ENCODE measurements at regions of chr14 and their contacts with region 1.

Region 1: GRCh38 chr14:99192028-99192621 is 79.9 kb downstream of the BCL11B start:
- DNase-seq: peak in 1 of 2 donors; percentile 74
- ATAC-seq: peak in 2 of 3 donors; percentile 37 to 50
- H3K4me3 ChIP-seq: no peak overlapping the region
- H3K4me3 Mint-ChIP-seq: peak overlapping the region; percentile 90
- H3K27ac ChIP-seq: peak overlapping the region; percentile 44
- H3K27ac Mint-ChIP-seq: peak overlapping the region; percentile 84 to 89
- H3K4me1 ChIP-seq: peaks cover 60% of the 10 kb centered on the region
- H3K4me1 Mint-ChIP-seq: peaks cover 57 to 84% of the 10 kb centered on the region in 2 donors
- H3K27me3 ChIP-seq: no peaks in the 10 kb centered on the region
- H3K27me3 Mint-ChIP-seq: no peaks in the 10 kb centered on the region
- CTCF ChIP-seq: no peak

Region 2: DNA sequence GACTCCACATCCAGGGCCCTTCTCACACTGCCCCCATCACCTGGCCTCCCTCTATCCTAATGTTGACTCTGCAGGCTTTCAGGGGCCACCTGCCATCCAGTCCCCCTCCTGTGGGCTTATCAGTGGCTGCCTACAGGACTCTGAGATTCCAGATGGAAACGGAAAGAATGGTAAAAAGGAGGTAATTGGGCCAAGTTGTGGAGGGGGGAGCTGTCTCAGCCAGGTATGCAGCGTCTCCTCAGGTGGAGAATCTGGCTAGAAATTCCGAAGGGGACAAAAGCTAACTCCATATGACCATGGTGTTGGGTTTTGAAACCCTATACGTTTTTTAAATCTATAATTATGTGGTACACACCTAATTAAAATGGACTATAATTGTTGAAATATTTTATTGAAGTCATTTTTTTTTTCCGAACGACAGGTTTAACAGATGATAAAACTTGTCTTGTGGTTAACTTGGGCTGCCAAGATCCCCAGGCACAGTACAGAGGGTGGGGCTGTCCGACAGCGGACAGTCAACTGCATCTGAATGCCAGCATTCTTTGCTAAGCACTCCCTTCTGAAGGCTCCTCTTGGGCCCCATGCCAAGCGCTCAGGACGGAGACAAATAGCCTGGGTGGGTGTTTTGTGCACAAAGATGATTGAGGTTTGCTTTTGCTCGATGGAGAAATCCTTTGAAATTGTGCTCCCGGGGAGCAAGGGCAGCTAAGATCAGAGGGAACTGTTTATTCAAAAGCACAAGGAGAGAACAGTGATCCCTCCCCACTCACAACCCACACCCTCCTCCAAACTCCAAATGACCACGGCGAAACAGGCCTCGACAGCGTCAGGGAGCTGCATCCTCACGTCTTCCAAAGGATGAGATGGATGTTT is 285.8 kb before region 1 on chr14:
- intact Hi-C with region 1: no loop called
- DNase-seq: no peak
- ATAC-seq: no peak
- H3K4me3 ChIP-seq: no peak overlapping the region
- H3K4me3 Mint-ChIP-seq: no peak overlapping the region
- H3K27ac ChIP-seq: no peak overlapping the region
- H3K27ac Mint-ChIP-seq: no peak overlapping the region
- H3K4me1 ChIP-seq: no peaks in the 10 kb centered on the region
- H3K4me1 Mint-ChIP-seq: no peaks in the 10 kb centered on the region
- H3K27me3 ChIP-seq: no peaks in the 10 kb centered on the region
- H3K27me3 Mint-ChIP-seq: peaks cover 11 to 17% of the 10 kb centered on the region in 2 donors
- CTCF ChIP-seq: no peak

Region 3: GRCh38 chr14:99230208-99231151 is 38.4 kb after region 1 on chr14:
- intact Hi-C with region 1: loop called (anchors 5 kb)
- DNase-seq: peak; percentile 78 to 93
- ATAC-seq: peak; percentile 80 to 85 (median 84)
- H3K4me3 ChIP-seq: no peak overlapping the region
- H3K4me3 Mint-ChIP-seq: peak overlapping the region; percentile 82
- H3K27ac ChIP-seq: peak overlapping the region; percentile 81
- H3K27ac Mint-ChIP-seq: peak overlapping the region; percentile 94 to 96
- H3K4me1 ChIP-seq: peaks cover 97% of the 10 kb centered on the region
- H3K4me1 Mint-ChIP-seq: peaks cover 80 to 88% of the 10 kb centered on the region in 2 donors
- H3K27me3 ChIP-seq: no peaks in the 10 kb centered on the region
- H3K27me3 Mint-ChIP-seq: no peaks in the 10 kb centered on the region
- CTCF ChIP-seq: no peak

Region 4: DNA sequence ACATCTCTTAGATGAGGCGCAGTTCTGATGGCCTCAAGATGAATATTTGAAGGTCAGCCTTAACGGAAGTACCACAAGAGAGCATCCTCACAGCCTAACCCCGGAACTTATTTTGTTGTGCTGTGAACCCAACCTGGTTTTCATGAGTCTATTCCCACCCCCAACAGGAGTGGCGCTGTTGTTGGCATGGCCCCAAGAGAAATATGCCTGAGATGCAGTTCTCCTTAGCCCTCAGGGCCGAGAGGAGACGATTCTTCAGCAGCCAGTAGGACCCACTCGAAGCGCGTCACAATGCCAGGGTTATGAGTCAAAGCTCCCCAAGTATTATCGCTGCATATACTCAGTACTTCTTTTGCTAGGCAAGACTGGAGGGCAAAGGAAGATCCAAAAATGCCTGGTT is 104.4 kb after region 1 on chr14:
- intact Hi-C with region 1: no loop called
- DNase-seq: no peak
- ATAC-seq: no peak
- H3K4me3 ChIP-seq: no peak overlapping the region
- H3K4me3 Mint-ChIP-seq: no peak overlapping the region
- H3K27ac ChIP-seq: no peak overlapping the region
- H3K27ac Mint-ChIP-seq: no peak overlapping the region
- H3K4me1 ChIP-seq: no peaks in the 10 kb centered on the region
- H3K4me1 Mint-ChIP-seq: peaks cover 9 to 20% of the 10 kb centered on the region in 2 donors
- H3K27me3 ChIP-seq: peaks cover 2% of the 10 kb centered on the region
- H3K27me3 Mint-ChIP-seq: peaks cover 0 to 5% of the 10 kb centered on the region in 2 donors
- CTCF ChIP-seq: no peak

Measured in natural killer cell (primary cell).